ENCODE measurements at regions of chr2 and their contacts with region 1.

Region 1: GRCh38 chr2:64831134-64831976 is 157.8 kb upstream of the SLC1A4 start:
- DNase-seq: peak; percentile 47 to 94 (median 81)

Region 2: GRCh38 chr2:64653349-64654062 is 177.8 kb before region 1 on chr2 and contains the start of gene SERTAD2:
- intact Hi-C with region 1: loop called (anchors 10 kb)
- DNase-seq: peak; percentile 57 to 93 (median 86)

Region 3: GRCh38 chr2:64737547-64737946 is 93.8 kb before region 1 on chr2:
- intact Hi-C with region 1: no loop called
- DNase-seq: no peak

Region 4: DNA sequence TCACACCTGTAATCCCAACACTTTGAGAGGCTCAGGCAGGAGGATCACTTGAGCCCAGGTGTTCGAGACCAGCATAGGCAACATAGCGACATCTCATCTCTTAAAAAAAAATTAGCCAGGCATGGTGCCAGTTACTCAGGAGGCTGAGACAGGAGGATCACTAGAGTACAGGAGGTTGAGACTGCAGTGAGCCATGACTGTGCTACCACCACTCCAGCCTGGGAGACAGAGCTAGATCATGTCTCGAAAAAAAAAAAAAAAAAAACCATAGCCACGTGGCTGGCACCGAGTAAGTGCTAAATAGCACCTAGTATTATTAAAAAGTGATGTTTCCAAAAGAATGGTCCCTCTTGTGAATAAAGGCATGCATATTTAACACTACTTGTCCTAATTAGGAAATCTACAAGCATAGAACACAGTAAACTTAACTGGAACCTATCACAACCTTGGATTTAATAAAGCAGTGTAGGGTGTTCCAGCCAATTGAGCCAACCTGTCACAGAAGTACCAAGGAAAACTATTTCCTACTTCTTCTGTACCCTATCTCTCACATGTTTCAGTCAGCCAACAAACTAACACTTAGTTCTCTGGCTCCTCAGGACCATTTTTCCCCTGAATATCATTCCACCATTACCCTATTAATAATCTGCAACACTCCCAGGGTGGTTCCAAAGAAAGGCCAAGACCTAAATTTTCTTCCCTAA is 289.8 kb after region 1 on chr2:
- intact Hi-C with region 1: no loop called
- DNase-seq: peak in 1 of 42 donors; percentile 21

Measured in head of caudate nucleus (tissue), 42 donors.